Heart left ventricle (tissue), 16 donors: ENCODE measurements at regions of chr10 and their contacts with region 1.

Region 1: GRCh38 chr10:116287906-116288501 is 15.0 kb upstream of the GFRA1 start:
- DNase-seq: peak in 3 of 5 donors; percentile 14 to 37 (median 25)
- ATAC-seq: peak in 1 of 4 donors; percentile 61
- H3K4me3 ChIP-seq: no peak overlapping the region
- H3K27ac ChIP-seq: no peak overlapping the region
- H3K4me1 ChIP-seq: no peaks in the 10 kb centered on the region
- H3K27me3 ChIP-seq: peaks cover 0 to 21% (median 0%) of the 10 kb centered on the region in 9 donors
- CTCF ChIP-seq: peak; percentile 44 to 77 (median 64)
- POLR2A ChIP-seq: no peak

Region 2: DNA sequence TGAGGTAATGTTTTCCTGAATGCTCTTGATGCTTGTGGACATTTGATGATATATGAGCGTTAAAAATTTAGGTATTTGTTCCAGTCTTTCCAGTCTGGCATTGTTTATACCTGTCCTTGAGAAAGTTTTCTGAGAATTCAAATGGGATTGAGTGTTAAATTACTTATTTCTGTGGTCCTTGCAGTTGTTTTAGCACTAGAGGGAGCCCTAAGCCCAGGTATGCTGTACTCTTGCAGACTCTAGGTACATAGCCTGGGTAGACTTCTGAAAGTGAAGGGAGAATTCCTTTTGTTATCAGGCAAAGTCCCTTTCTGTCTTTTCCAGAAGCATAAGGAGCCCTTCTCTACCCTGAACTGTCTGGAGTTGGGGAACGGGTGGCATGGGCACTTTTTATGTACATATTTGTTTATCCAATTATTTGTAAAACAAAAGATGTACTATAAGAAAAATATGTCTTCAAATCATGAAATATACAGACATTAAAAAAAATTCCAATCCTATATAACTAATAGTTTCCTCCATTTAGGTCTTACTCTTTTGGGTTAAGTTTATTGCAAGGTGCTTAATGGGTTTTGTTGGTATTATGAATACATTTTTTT is 932.7 kb before region 1 on chr10:
- intact Hi-C with region 1: loop called in 2 of 10 experiments (anchors 2 to 5 kb)
- DNase-seq: no peak
- ATAC-seq: peak in 1 of 4 donors; percentile 60
- H3K4me3 ChIP-seq: no peak overlapping the region
- H3K27ac ChIP-seq: no peak overlapping the region
- H3K4me1 ChIP-seq: no peaks in the 10 kb centered on the region
- H3K27me3 ChIP-seq: no peaks in the 10 kb centered on the region
- CTCF ChIP-seq: peak; percentile 16 to 60 (median 44)
- POLR2A ChIP-seq: no peak

Region 3: DNA sequence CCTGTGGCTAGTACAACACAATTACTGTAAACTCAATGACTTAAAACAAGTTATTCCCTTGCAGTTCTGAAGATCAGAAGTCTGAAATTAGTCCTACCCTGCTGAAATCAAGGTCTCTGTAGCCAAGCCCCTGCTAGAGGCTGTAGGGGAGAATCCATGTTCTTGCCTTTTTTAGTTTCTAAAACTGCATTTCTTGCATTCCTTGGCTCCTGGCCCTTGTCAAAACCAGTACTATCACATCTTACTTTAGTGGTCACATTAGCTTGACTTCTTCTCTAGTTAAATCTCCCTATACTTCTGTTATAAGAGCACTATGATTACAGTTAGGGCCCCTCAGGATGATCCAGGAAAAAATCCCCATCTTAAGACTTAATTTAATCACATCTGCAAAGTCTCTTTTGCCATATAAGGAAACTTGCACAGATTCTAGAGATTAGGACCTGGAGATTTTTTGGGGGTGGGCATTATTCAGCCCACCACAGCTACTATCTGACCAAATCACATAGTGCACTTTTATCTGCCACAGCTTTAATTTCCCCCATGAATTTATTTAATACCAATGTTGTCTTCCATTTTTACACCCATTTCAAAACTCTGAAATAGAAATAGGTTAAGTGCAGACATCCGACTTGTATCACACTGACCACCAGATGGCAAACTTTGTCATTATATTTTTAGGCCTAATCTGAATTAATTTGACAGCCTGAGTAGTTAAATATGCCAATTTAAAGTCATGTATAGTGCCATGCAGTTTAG is 581.8 kb before region 1 on chr10:
- intact Hi-C with region 1: loop called (anchors 5 to 10 kb)
- DNase-seq: no peak
- ATAC-seq: no peak
- H3K4me3 ChIP-seq: no peak overlapping the region
- H3K27ac ChIP-seq: no peak overlapping the region
- H3K4me1 ChIP-seq: no peaks in the 10 kb centered on the region
- H3K27me3 ChIP-seq: no peaks in the 10 kb centered on the region
- CTCF ChIP-seq: peak; percentile 14 to 53 (median 34)
- POLR2A ChIP-seq: no peak

Region 4: GRCh38 chr10:115795964-115796363 is 492.0 kb before region 1 on chr10:
- intact Hi-C with region 1: loop called in 8 of 10 experiments (anchors 2 to 10 kb)
- DNase-seq: no peak
- ATAC-seq: no peak
- H3K4me3 ChIP-seq: no peak overlapping the region
- H3K27ac ChIP-seq: no peak overlapping the region
- H3K4me1 ChIP-seq: no peaks in the 10 kb centered on the region
- H3K27me3 ChIP-seq: peaks cover 0 to 2% (median 0%) of the 10 kb centered on the region in 9 donors
- CTCF ChIP-seq: no peak
- POLR2A ChIP-seq: no peak

Region 5: GRCh38 chr10:115829521-115830205 is 458.3 kb before region 1 on chr10:
- intact Hi-C with region 1: loop called in 3 of 10 experiments (anchors 1 to 10 kb)
- DNase-seq: no peak
- ATAC-seq: peak in 2 of 4 donors; percentile 27 to 50
- H3K4me3 ChIP-seq: no peak overlapping the region
- H3K27ac ChIP-seq: no peak overlapping the region
- H3K4me1 ChIP-seq: peaks cover 0 to 22% (median 0%) of the 10 kb centered on the region in 12 donors
- H3K27me3 ChIP-seq: no peaks in the 10 kb centered on the region
- CTCF ChIP-seq: peak in 9 of 12 donors; percentile 15 to 46 (median 32)
- POLR2A ChIP-seq: no peak

Region 6: DNA sequence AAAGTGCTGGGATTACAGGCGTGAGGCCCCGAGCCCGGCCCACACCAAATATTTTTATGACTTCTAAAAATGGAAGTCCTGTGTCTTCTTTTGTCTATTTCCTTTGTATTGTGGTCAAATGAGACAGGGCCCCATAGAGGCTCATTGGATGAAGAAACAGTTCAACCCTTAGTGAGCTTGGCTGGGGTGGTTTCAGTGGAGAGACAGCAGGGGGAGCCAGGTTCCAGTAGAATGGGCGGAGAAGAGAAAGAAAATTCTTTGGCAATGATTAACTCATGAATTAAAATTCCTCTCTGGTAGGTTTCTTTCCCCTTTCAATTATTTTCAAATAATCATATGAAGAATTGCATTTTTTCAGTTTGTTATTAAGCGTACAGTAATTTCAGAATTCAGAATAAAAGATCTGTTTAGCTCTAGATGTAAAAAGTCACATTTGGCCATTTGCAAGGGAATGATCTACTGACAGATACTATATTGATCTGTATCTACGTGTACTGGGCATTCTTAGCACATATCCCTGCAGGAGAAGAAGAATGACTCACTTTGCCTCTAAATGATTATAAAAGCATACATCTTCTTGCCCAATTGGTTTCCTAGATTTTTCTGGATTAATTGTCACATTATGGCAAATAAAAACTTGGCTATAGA is 182.9 kb after region 1 on chr10:
- intact Hi-C with region 1: no loop called
- DNase-seq: no peak
- ATAC-seq: no peak
- H3K4me3 ChIP-seq: no peak overlapping the region
- H3K27ac ChIP-seq: no peak overlapping the region
- H3K4me1 ChIP-seq: no peaks in the 10 kb centered on the region
- H3K27me3 ChIP-seq: peaks cover 0 to 25% (median 0%) of the 10 kb centered on the region in 9 donors
- CTCF ChIP-seq: no peak
- POLR2A ChIP-seq: no peak